Activated CD8-positive, alpha-beta memory T cell treated with anti-CD3 and anti-CD28 coated beads, Interleukin-2, amount 10 ng/mL, durations not matched to agents 7 days and 5 days (primary cell): ENCODE measurements at regions of chr1 and their contacts with region 1.

Region 1: GRCh38 chr1:167533851-167534300 is 15.5 kb upstream of the CD247 start:
- DNase-seq: peak; percentile 73
- ATAC-seq: peak; percentile 86
- H3K4me3 Mint-ChIP-seq: no peak overlapping the region
- H3K27ac Mint-ChIP-seq: no peak overlapping the region
- H3K4me1 Mint-ChIP-seq: peaks cover 4% of the 10 kb centered on the region
- H3K27me3 Mint-ChIP-seq: peaks cover 7% of the 10 kb centered on the region

Region 2: GRCh38 chr1:167401260-167401873 is 132.5 kb before region 1 on chr1:
- CTCF ChIA-PET with region 1: interaction called, 35 read pairs
- DNase-seq: peak; percentile 74
- ATAC-seq: peak; percentile 89
- H3K4me3 Mint-ChIP-seq: no peak overlapping the region
- H3K27ac Mint-ChIP-seq: no peak overlapping the region
- H3K4me1 Mint-ChIP-seq: peaks cover 3% of the 10 kb centered on the region
- H3K27me3 Mint-ChIP-seq: no peaks in the 10 kb centered on the region

Region 3: GRCh38 chr1:167442124-167442848 is 91.6 kb before region 1 on chr1:
- CTCF ChIA-PET with region 1: interaction called, 33 read pairs
- DNase-seq: peak; percentile 85
- ATAC-seq: peak; percentile 83
- H3K4me3 Mint-ChIP-seq: no peak overlapping the region
- H3K27ac Mint-ChIP-seq: peak overlapping the region; percentile 31
- H3K4me1 Mint-ChIP-seq: peaks cover 81% of the 10 kb centered on the region
- H3K27me3 Mint-ChIP-seq: no peaks in the 10 kb centered on the region

Region 4: DNA sequence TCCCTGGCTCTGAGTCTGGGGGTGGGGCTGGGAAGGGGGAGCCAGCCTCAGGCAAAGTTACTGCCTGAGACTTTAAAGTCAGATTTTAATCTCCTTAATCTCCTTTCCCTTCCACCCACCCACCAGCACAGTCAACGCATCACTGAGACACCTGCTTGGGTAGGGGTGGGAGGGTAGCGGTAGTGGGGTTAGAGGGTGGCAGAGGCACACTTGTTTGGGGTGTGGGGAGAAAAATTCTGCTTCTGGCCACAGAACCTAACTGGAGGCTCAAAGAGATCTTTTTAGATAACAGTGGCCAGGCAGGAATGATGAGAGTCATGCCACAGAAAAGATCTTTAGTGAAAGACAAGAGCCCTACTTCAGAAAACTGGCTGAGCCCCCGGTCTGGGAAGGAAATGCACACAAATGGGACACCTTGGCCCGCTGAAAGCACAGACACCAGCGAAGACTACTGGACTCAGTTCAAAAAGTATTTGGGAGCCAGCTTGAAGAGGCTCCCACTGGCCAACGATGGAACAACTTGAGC is 59.6 kb before region 1 on chr1:
- CTCF ChIA-PET with region 1: no interaction called
- DNase-seq: no peak
- ATAC-seq: peak; percentile 72
- H3K4me3 Mint-ChIP-seq: peak overlapping the region; percentile 6
- H3K27ac Mint-ChIP-seq: peak overlapping the region; percentile 63
- H3K4me1 Mint-ChIP-seq: peaks cover 68% of the 10 kb centered on the region
- H3K27me3 Mint-ChIP-seq: no peaks in the 10 kb centered on the region

Region 5: DNA sequence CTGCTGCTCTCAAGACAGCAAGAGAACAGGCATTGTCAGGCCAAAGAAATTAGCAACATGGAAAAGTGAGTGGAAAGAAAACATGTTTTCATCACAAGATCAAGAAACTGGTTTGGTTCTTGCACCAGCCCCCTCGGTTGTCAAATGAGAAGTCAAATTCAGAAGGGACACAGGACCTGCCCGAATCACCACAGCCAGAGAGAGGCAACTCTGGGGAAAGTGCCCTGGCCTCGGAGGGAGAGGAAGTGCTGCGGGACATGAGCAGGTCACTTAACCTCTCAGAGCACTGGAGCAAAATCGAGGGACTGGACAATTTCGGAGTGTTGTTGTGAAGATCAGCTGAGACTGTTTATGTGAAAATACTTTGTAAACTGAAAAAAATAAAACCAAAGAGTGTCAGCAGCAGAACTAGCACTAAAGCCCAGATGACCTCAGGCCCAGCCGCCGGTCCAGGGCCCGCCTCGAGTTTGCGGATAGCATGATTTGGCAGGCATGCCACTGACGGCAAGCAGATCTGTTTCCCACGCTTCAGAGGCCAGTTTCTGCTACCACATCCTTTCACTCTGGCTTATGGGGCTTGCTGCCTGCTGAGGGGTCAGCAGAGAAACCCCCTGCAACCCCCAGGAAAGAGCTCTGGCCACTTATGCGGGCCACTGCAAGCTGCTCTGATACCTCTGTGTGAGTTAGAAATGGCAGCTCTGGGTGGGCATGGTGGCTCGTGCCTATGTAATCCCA is 47.6 kb before region 1 on chr1:
- CTCF ChIA-PET with region 1: interaction called, 14 read pairs
- DNase-seq: peak; percentile 55
- ATAC-seq: no peak
- H3K4me3 Mint-ChIP-seq: peak overlapping the region; percentile 27
- H3K27ac Mint-ChIP-seq: peak overlapping the region; percentile 80
- H3K4me1 Mint-ChIP-seq: peaks cover 96% of the 10 kb centered on the region
- H3K27me3 Mint-ChIP-seq: no peaks in the 10 kb centered on the region

Region 6: GRCh38 chr1:167517535-167518330 is 16.1 kb before region 1 on chr1:
- CTCF ChIA-PET with region 1: interaction called, 42 read pairs
- DNase-seq: peak; percentile 93
- ATAC-seq: peak; percentile 90
- H3K4me3 Mint-ChIP-seq: peak overlapping the region; percentile 94
- H3K27ac Mint-ChIP-seq: peak overlapping the region; percentile 98
- H3K4me1 Mint-ChIP-seq: peaks cover 41% of the 10 kb centered on the region
- H3K27me3 Mint-ChIP-seq: peaks cover 4% of the 10 kb centered on the region